Endothelial cell of umbilical vein (primary cell): ENCODE measurements at regions of chr14 and their contacts with region 1.

Region 1: GRCh38 chr14:41606532-41607303 is at the start of gene LRFN5:
- DNase-seq: no peak
- H3K4me3 ChIP-seq: peak within 1 kb of the TSS in 2 of 3 experiments; percentile 12 to 47
- H3K27ac ChIP-seq: no peak within 1 kb of the TSS
- H3K4me1 ChIP-seq: peaks cover 4% of the 10 kb centered on the region
- H3K27me3 ChIP-seq: peaks cover 45 to 69% of the 10 kb centered on the region in 2 experiments
- CTCF ChIP-seq: no peak
- POLR2A ChIP-seq: no peak
- total RNA-seq, gene LRFN5: not detected in 2 replicates

Region 2: GRCh38 chr14:41623736-41624135 is 17.0 kb after region 1 on chr14:
- CTCF ChIA-PET with region 1: interaction called, 11 read pairs
- POLR2A ChIA-PET with region 1: no interaction called
- dilution Hi-C with region 1: no loop called
- intact Hi-C with region 1: no loop called
- DNase-seq: no peak
- H3K4me3 ChIP-seq: no peak overlapping the region
- H3K27ac ChIP-seq: no peak overlapping the region
- H3K4me1 ChIP-seq: no peaks in the 10 kb centered on the region
- H3K27me3 ChIP-seq: no peaks in the 10 kb centered on the region
- CTCF ChIP-seq: no peak
- POLR2A ChIP-seq: no peak